HCT116 (cell line): ENCODE measurements at regions of chr5 and their contacts with region 1.

Region 1: GRCh38 chr5:159444441-159445082 is 114.3 kb upstream of the IL12B start:
- DNase-seq: peak; percentile 29
- ATAC-seq: peak; percentile 77
- H3K4me3 ChIP-seq: no peak overlapping the region
- H3K27ac ChIP-seq: no peak overlapping the region
- H3K4me1 ChIP-seq: peaks cover 4 to 10% of the 10 kb centered on the region in 2 experiments; a peak in 3 of 4 replicates
- H3K27me3 ChIP-seq: no peaks in the 10 kb centered on the region
- CTCF ChIP-seq: peak; percentile 26 to 76 (median 60); a peak in 3 of 6 replicates
- POLR2A ChIP-seq: no peak
- RAD21 ChIP-seq: peak; percentile 90

Region 2: DNA sequence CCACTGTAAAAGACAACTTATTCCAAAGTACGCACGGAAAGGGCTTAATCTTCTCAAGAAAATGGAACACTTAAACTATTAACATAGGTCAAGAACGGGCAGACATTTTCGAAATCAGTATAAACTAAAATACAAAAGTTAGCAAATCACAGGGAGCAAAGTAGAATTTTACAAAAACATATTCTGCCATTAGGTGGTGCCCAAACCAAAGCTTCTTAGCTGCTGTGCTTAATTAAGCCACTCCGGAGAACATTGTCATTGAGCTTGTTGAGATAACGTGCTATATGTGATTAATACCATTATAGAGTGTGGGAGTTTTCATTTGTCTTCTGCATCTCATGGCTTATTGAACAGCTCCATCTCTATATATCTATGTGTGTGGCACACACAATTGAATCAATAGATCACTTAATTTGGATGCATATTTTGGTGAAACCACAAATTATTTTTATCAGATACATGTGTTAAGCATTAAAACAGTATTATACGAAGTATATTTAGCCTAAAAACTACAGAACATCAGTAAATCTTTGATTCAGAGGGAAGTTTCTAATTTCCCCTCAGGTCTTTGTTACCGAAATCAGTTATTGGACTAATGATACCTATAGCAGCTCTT is 158.0 kb before region 1 on chr5:
- CTCF ChIA-PET with region 1: interaction called, 6 read pairs
- POLR2A ChIA-PET with region 1: no interaction called
- RAD21 ChIA-PET with region 1: no interaction called
- intact Hi-C with region 1: loop called (anchors 2 kb)
- DNase-seq: no peak
- ATAC-seq: peak; percentile 50; the same call in 1 of the 2 replicates
- H3K4me3 ChIP-seq: no peak overlapping the region
- H3K27ac ChIP-seq: no peak overlapping the region
- H3K4me1 ChIP-seq: no peaks in the 10 kb centered on the region
- H3K27me3 ChIP-seq: no peaks in the 10 kb centered on the region
- CTCF ChIP-seq: peak; percentile 35 to 56 (median 46); a peak in 4 of 6 replicates
- POLR2A ChIP-seq: no peak
- RAD21 ChIP-seq: peak; percentile 75

Region 3: DNA sequence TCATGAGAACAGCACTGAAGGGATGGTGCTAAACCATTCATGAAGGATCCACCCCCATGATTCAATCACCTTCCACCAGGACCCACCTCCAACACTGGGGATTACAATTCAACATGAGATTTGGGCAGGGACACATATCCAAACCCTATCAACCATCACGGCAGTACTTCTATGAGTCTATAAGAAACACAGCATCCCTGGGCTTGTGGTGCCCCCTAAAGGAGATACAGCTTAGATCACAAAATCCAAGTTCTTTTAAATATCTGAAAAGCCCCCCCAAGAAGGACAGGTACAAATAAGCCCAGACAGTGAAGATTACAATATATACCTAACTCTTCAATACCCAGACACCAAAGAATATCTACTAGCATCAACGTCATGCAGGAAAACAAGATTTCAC is 238.1 kb after region 1 on chr5:
- CTCF ChIA-PET with region 1: no interaction called
- POLR2A ChIA-PET with region 1: no interaction called
- RAD21 ChIA-PET with region 1: no interaction called
- intact Hi-C with region 1: loop called (anchors 1 kb)
- DNase-seq: peak; percentile 12
- ATAC-seq: peak; percentile 50; the same call in 1 of the 2 replicates
- H3K4me3 ChIP-seq: no peak overlapping the region
- H3K27ac ChIP-seq: no peak overlapping the region
- H3K4me1 ChIP-seq: no peaks in the 10 kb centered on the region
- H3K27me3 ChIP-seq: no peaks in the 10 kb centered on the region
- CTCF ChIP-seq: peak; percentile 15 to 47 (median 44); a peak in 3 of 6 replicates
- POLR2A ChIP-seq: no peak
- RAD21 ChIP-seq: peak; percentile 74

Region 4: GRCh38 chr5:159826351-159827214 is 382.0 kb after region 1 on chr5:
- CTCF ChIA-PET with region 1: no interaction called
- POLR2A ChIA-PET with region 1: no interaction called
- RAD21 ChIA-PET with region 1: no interaction called
- intact Hi-C with region 1: loop called (anchors 10 kb)
- DNase-seq: peak; percentile 81
- ATAC-seq: peak; percentile 94
- H3K4me3 ChIP-seq: peak overlapping the region in 1 of 2 experiments; percentile 29; a peak in 2 of 4 replicates
- H3K27ac ChIP-seq: peak overlapping the region; percentile 54
- H3K4me1 ChIP-seq: peaks cover 25 to 35% of the 10 kb centered on the region in 2 experiments
- H3K27me3 ChIP-seq: no peaks in the 10 kb centered on the region
- CTCF ChIP-seq: no peak
- POLR2A ChIP-seq: no peak
- RAD21 ChIP-seq: peak; percentile 40; the same call in 1 of the 2 replicates